SK-N-SH (cell line): ENCODE measurements at regions of chr10 and their contacts with region 1.

Region 1: DNA sequence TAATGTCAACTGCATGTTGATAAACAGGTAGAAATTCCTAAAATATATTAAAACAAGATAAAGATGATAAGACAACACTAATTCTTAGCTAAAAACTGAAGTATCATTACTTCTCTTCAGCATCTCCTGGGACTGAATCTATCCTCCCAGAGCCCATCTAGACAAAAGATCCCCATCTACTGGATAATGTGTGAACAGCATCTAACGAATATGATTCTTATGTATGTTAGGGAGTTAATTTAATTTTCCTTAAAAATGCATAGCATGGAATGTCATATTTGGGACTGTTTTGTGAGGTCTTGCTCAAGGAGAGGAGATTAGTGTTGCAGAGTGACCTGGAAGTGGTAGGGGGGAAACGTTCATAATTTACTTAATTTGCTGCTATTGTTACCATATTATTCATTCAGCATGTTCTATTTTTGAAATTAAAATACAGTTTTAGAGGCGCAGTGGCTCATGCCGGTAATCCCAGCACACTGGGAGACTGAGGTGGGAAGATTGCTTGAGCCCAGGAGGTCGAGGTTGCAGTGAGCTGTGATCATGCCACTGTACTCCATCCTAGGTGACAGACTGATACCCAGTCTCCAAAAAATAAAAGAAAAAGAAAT is 305.1 kb upstream of the CSTF2T start:
- DNase-seq: peak; percentile 60
- H3K4me3 ChIP-seq: no peak overlapping the region
- H3K27ac ChIP-seq: no peak overlapping the region
- H3K4me1 ChIP-seq: no peaks in the 10 kb centered on the region; a peak in 1 of 4 replicates
- H3K27me3 ChIP-seq: no peaks in the 10 kb centered on the region
- CTCF ChIP-seq: peak; percentile 81
- EP300 ChIP-seq: no peak
- RAD21 ChIP-seq: peak; percentile 84

Region 2: DNA sequence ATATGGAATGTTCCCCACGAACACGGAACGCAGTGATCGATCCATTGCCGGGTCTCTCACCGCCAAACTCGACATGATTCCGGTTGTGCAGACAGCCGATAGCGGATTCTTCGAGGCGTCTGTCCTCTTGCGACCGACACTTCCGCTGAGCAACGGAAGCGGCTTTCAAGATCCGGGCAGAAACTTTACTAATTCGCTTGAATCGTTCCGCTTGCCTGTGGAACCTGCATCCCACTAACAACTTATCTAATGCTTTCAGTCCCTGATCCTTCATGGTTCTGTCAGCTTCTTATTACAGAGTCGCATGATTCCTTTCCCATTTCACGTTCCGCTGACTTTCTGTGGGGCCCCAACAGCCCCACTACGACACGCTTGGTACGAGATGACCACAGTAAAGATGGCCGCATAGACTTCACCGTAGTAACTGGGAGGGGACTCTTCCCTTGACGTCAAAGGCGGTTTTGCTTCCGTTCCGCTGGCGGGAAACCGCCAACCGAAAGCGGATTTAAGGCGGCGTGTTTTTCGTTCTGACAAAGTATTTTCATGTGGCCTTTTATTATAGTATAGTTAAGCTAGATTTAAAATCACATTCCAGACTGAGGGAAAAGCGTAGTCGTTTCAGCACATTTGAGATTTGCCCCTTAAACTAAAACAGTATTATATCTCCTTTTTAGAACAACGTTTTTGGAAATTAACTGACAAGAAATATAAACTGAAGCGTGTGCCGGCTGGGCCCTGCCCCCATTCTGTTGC is 304.8 kb before region 1 on chr10 and contains the start of gene CSTF2T:
- CTCF ChIA-PET with region 1: no interaction called
- POLR2A ChIA-PET with region 1: no interaction called
- DNase-seq: peak; percentile 64
- H3K4me3 ChIP-seq: peak within 1 kb of the TSS; percentile 79 to 99
- H3K27ac ChIP-seq: peak within 1 kb of the TSS; percentile 86 to 99
- H3K4me1 ChIP-seq: peaks cover 0 to 26% of the 10 kb centered on the region in 2 experiments; a peak in 3 of 4 replicates
- H3K27me3 ChIP-seq: no peaks in the 10 kb centered on the region
- CTCF ChIP-seq: no peak
- EP300 ChIP-seq: 0 out of 4 replicates have a peak, but pooled peaks of 1 of the 2 experiments have one; percentile 13
- RAD21 ChIP-seq: peak; percentile 21; the same call in 1 of the 2 replicates
- polyA plus RNA-seq, gene CSTF2T: 4.3 and 4.6 TPM in 2 replicates

Region 3: DNA sequence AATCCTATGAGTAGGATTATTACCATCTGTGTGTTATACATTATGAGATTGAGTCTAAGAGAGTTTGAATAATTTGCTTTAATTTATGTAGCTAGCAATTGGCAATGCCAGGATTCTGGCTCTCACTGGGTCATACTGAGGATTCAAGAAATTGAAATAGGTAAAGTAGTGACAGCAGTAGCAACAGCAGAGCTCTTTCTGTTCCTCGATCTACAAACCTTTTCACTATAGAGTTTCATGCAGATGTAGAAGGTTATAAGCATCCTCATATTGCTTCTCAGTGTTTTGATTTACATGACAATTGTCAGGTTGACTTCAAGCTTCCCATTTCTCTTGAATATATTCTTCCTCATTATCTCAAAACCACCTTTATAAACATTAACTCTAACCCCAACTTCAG is 11.0 kb before region 1 on chr10:
- CTCF ChIA-PET with region 1: interaction called, 10 read pairs
- POLR2A ChIA-PET with region 1: no interaction called
- DNase-seq: no peak
- H3K4me3 ChIP-seq: no peak overlapping the region
- H3K27ac ChIP-seq: no peak overlapping the region
- H3K4me1 ChIP-seq: no peaks in the 10 kb centered on the region
- H3K27me3 ChIP-seq: no peaks in the 10 kb centered on the region
- CTCF ChIP-seq: no peak
- EP300 ChIP-seq: no peak
- RAD21 ChIP-seq: no peak